Right ventricle myocardium inferior (tissue), 1 donor: ENCODE measurements at regions of chr10 and their contacts with region 1.

Region 1: GRCh38 chr10:127983344-127984100 is 76.6 kb downstream of the PTPRE start:
- DNase-seq: no peak
- ATAC-seq: no peak

Region 2: DNA sequence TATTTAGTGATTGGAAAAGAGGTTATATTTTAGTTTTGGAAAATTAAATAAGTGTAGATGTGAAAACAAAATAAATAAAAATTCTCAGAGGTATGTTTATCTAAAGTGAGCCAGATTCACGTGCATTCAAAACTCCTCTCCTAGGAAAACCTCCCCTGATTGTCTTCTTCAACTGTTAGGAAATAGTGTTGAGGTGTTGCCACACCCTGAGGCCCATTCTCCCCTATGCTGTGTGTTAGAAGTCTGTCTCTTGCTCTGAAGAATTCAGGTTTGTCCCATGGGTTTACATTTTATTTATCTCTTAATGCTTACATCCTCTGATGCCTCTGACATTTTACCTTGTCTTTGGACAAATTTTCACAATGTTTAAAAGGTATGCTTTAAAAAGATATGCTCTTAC is 36.3 kb before region 1 on chr10:
- intact Hi-C with region 1: no loop called
- DNase-seq: no peak
- ATAC-seq: no peak

Region 3: GRCh38 chr10:128000471-128001362 is 17.2 kb after region 1 on chr10:
- intact Hi-C with region 1: loop called (anchors 2 kb)
- DNase-seq: no peak
- ATAC-seq: peak; percentile 81